GM12878 (cell line): ENCODE measurements at regions of chrX and their contacts with region 1.

Region 1: GRCh38 chrX:19887911-19888879 is 795 bp upstream of the SH3KBP1 start:
- DNase-seq: no peak
- ATAC-seq: peak; percentile 10
- H3K4me3 ChIP-seq: peak overlapping the region; percentile 58; the same call in 1 of the 2 replicates
- H3K27ac ChIP-seq: peak overlapping the region; percentile 69
- H3K4me1 ChIP-seq: peaks cover 9% of the 10 kb centered on the region; the same call in 1 of the 2 replicates
- H3K27me3 ChIP-seq: no peaks in the 10 kb centered on the region
- CTCF ChIP-seq: peak; percentile 15 to 60 (median 33); a peak in 4 of 6 replicates
- EP300 ChIP-seq: no peak
- POLR2A ChIP-seq: peak; percentile 54
- RAD21 ChIP-seq: peak; percentile 73

Region 2: GRCh38 chrX:19343535-19344408 is 544.4 kb before region 1 on chrX and contains the start of gene PDHA1:
- CTCF ChIA-PET with region 1: no interaction called
- POLR2A ChIA-PET with region 1: no interaction called
- RAD21 ChIA-PET with region 1: no interaction called
- SMC1A ChIA-PET with region 1: no interaction called
- in situ Hi-C with region 1: no loop called
- intact Hi-C with region 1: loop called (anchors 10 kb)
- DNase-seq: peak; percentile 68
- ATAC-seq: peak; percentile 96
- H3K4me3 ChIP-seq: peak within 1 kb of the TSS; percentile 73
- H3K27ac ChIP-seq: peak within 1 kb of the TSS; percentile 40; the same call in 1 of the 2 replicates
- H3K4me1 ChIP-seq: no peaks in the 10 kb centered on the region
- H3K27me3 ChIP-seq: no peaks in the 10 kb centered on the region
- CTCF ChIP-seq: no peak
- EP300 ChIP-seq: no peak
- POLR2A ChIP-seq: peak; percentile 76
- RAD21 ChIP-seq: no peak
- polyA plus RNA-seq, gene PDHA1: 233 to 340 TPM

Region 3: DNA sequence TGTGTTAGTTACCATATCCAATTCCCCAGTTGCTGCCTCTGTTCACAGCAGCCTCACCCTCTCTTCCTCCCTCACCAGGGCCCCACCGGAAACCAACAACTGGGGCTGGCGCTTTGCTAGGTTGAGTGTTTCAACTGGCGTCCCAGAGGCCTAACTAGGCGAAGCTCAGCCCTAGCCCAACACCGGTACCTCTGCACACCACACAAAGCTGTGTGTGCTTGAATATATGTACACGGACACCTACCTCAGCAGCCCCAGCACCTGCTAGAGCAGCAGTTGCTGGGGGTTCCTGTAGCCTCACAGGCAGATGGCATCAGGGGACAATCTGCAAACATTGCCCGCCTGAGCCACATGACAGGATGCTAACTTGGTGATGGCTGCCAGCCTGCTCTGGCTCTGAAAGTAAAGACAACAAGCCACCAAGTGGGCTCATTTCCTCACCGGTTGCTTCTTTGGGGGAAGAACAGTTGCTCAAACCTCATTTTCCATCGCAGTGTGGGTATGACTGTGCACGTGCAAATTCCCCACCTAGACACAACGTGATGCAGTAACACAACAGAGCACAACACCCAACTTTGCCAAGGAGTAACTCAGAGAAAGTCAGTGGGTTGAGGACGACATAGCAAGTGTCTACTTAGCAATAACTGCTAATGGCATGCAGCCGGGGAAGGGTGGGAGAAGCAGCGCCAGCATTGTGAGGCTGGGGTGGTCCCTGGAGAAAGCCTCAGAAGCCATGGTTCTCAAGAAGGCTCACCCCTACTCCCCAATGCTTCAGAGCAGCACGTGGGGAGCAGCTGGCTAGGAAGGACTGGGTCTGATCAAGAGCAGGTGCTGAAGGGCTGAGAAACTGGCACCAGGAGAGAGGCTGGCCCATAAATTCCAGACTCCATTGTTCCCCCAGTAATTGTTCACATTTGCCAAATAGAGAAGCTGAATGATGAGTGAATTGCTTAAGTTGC is 140.3 kb before region 1 on chrX:
- CTCF ChIA-PET with region 1: interaction called, 4 read pairs
- POLR2A ChIA-PET with region 1: interaction called, 4 read pairs
- RAD21 ChIA-PET with region 1: interaction called, 11 read pairs
- SMC1A ChIA-PET with region 1: interaction called, 6 read pairs
- in situ Hi-C with region 1: no loop called
- intact Hi-C with region 1: no loop called
- DNase-seq: no peak
- ATAC-seq: peak; percentile 48
- H3K4me3 ChIP-seq: no peak overlapping the region
- H3K27ac ChIP-seq: peak overlapping the region; percentile 91
- H3K4me1 ChIP-seq: peaks cover 59% of the 10 kb centered on the region
- H3K27me3 ChIP-seq: no peaks in the 10 kb centered on the region
- CTCF ChIP-seq: no peak
- EP300 ChIP-seq: peak in 1 of 2 experiments; percentile 33; a peak in 1 of 4 replicates
- POLR2A ChIP-seq: no peak
- RAD21 ChIP-seq: no peak

Region 4: GRCh38 chrX:19846995-19847790 is 41.0 kb before region 1 on chrX:
- CTCF ChIA-PET with region 1: interaction called, 5 read pairs
- POLR2A ChIA-PET with region 1: interaction called, 4 read pairs
- RAD21 ChIA-PET with region 1: interaction called, 6 read pairs
- SMC1A ChIA-PET with region 1: interaction called, 21 read pairs
- in situ Hi-C with region 1: no loop called
- intact Hi-C with region 1: loop called (anchors 5 kb)
- DNase-seq: no peak
- ATAC-seq: peak; percentile 55
- H3K4me3 ChIP-seq: 0 out of 2 replicates have a peak overlapping the region, but pooled peaks have one; percentile 8
- H3K27ac ChIP-seq: peak overlapping the region; percentile 79
- H3K4me1 ChIP-seq: peaks cover 38% of the 10 kb centered on the region
- H3K27me3 ChIP-seq: no peaks in the 10 kb centered on the region
- CTCF ChIP-seq: no peak
- EP300 ChIP-seq: no peak
- POLR2A ChIP-seq: no peak
- RAD21 ChIP-seq: no peak

Region 5: GRCh38 chrX:19869193-19869592 is 19.0 kb before region 1 on chrX:
- CTCF ChIA-PET with region 1: interaction called, 4 read pairs
- POLR2A ChIA-PET with region 1: interaction called, 19 read pairs
- RAD21 ChIA-PET with region 1: interaction called, 33 read pairs
- SMC1A ChIA-PET with region 1: interaction called, 37 read pairs
- in situ Hi-C with region 1: no loop called
- intact Hi-C with region 1: no loop called
- DNase-seq: no peak
- ATAC-seq: no peak
- H3K4me3 ChIP-seq: no peak overlapping the region
- H3K27ac ChIP-seq: peak overlapping the region; percentile 86
- H3K4me1 ChIP-seq: peaks cover 62% of the 10 kb centered on the region
- H3K27me3 ChIP-seq: no peaks in the 10 kb centered on the region
- CTCF ChIP-seq: no peak
- EP300 ChIP-seq: no peak
- POLR2A ChIP-seq: no peak
- RAD21 ChIP-seq: no peak

Region 6: GRCh38 chrX:20001588-20001987 is 113.4 kb after region 1 on chrX:
- CTCF ChIA-PET with region 1: no interaction called
- POLR2A ChIA-PET with region 1: no interaction called
- RAD21 ChIA-PET with region 1: no interaction called
- SMC1A ChIA-PET with region 1: no interaction called
- in situ Hi-C with region 1: no loop called
- intact Hi-C with region 1: no loop called
- DNase-seq: no peak
- ATAC-seq: no peak
- H3K4me3 ChIP-seq: no peak overlapping the region
- H3K27ac ChIP-seq: no peak overlapping the region
- H3K4me1 ChIP-seq: no peaks in the 10 kb centered on the region
- H3K27me3 ChIP-seq: no peaks in the 10 kb centered on the region
- CTCF ChIP-seq: no peak
- EP300 ChIP-seq: no peak
- POLR2A ChIP-seq: no peak
- RAD21 ChIP-seq: no peak

Region 7: GRCh38 chrX:20066968-20067708 is 178.9 kb after region 1 on chrX:
- CTCF ChIA-PET with region 1: no interaction called
- POLR2A ChIA-PET with region 1: interaction called, 5 read pairs
- RAD21 ChIA-PET with region 1: no interaction called
- SMC1A ChIA-PET with region 1: no interaction called
- in situ Hi-C with region 1: no loop called
- intact Hi-C with region 1: loop called (anchors 5 kb)
- DNase-seq: no peak
- ATAC-seq: peak; percentile 79
- H3K4me3 ChIP-seq: no peak overlapping the region
- H3K27ac ChIP-seq: no peak overlapping the region
- H3K4me1 ChIP-seq: no peaks in the 10 kb centered on the region
- H3K27me3 ChIP-seq: peaks cover 0 to 2% of the 10 kb centered on the region in 2 experiments; a peak in 1 of 4 replicates
- CTCF ChIP-seq: peak; percentile 56 to 83 (median 67); a peak in 5 of 6 replicates
- EP300 ChIP-seq: no peak
- POLR2A ChIP-seq: no peak
- RAD21 ChIP-seq: peak; percentile 81